Posterior vena cava (tissue), 2 donors: ENCODE measurements at regions of chrX and their contacts with region 1.

Region 1: DNA sequence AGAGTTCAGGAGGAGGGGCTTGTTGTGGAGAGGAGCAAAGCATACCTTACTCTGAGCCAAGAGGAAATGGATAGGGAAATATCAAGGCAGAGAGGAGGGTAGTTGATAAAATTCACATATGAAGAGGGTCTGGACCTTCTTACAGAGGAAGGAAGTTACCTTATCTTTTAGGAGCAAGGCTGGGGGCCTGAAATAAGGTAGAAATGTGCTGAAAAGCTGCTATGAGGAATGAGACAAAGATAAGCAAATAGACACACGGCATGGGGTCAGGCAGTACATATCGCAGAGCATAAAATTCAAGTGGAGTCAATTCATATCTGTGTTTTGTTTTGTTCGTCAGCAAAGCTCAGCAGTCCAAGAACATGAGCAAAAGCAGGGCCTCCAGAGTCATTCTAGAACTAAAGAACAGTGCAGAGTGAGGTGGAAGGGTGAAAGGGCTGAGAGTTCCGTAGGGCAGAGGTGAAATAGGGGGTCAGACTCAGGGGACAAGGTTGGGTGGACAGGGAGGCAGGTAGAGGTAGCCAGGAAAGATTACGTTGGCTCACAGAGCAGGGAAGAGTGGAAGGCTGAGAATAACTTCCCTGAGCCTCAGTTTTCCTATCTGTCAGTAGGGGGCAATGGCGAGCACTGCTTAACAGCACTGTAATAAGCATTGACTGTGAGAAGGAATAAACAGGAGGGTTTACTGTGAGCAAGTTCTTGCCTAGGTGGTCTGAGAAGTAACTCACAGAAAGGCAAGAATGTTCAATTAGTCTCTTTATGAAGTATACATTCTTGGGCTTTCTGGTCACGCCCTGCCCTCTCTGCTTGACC is 9.2 kb downstream of the VSIG4 start:
- DNase-seq: no peak

Region 2: DNA sequence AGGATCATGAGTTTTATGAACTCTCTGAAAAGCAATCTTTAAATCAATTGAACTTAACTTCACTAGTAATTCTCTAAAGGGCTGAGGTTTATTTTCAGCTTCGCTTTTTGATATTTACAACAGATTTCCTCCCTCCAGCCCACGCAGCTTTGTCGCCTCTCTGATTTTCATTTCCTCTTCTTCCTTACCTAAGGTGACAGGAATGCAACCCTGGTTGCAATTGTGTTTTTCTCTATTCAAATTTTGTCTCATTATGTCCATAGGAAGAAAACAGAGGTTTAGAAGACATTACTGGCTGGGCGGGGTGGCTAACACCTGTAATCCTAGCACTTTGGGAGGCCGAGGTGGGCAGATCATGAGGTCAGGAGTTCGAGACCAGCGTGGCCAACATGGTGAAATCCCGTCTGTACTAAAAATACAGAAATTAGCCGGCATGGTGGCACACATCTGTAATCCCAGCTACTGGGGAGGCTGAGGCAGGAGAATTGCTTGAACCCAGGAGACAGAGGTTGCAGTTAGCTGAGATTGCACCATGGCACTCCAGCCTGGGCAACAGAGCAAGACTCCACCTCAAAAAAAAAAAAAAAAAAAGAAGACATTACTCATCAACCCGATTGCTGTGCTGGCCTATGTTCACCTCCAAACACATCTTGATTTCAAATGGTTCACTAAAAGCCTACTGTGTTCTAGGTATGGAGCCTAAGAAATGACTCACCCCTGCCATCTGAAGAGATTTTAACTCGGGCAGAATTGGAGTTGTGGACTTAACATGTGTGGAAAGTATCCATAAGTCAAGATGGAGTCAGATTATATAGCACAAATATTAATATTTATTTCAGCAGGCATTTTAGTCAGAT is 27.7 kb before region 1 on chrX:
- intact Hi-C with region 1: loop called in 1 of 2 experiments (anchors 1 kb)
- DNase-seq: no peak